Left colon (tissue), 2 donors: ENCODE measurements at regions of chr3 and their contacts with region 1.

Region 1: DNA sequence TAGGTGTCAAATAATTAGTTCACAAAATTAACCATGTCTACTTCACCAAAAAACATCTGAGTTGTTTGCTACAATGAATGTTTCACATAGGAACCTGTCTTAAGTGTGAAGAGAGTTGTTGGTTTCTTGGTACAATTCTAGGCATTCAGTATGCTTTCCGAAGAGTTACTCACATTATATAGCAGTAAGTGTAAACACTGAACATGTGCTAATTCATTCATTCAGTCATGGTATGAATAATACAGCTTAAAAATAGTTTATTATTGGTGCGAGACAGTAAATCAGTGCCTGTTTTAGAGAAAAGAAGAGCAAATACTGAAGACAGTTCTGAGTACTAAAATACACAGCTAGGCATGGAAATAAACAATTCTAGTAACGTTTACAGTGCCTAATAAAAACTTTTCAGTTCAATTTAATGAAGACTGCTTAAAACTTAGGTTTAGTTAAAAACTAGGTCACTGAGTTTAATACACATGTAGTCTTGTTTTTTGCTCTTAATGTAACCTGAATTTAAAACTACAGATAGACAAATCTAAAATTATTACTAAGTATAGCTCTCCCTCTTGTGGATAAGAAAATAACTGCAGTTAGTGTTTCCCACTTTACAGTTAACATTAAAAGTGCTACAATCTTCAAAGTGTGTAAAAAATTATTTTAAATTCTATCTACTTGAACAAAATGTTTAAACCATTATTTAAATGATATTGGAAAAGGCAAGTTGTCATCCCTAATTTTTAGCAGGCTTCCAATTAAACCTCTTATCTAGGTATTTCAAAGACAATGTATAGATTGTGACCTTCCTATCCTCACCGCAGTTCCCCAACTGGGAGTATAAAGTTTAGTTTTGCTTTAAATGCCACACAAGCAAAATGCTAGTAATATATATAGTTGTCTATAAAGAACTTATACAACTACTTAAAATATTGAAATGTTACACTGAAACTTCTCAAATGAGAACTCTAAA is 20.1 kb upstream of the ZCWPW2 start:
- DNase-seq: no peak
- ATAC-seq: peak; percentile 51

Region 2: GRCh38 chr3:27712136-27713077 is 616.1 kb before region 1 on chr3:
- intact Hi-C with region 1: loop called in 1 of 2 experiments (anchors 5 kb)
- DNase-seq: peak; percentile 63 to 72
- ATAC-seq: peak; percentile 93